HEK293 (cell line): ENCODE measurements at regions of chr5 and their contacts with region 1.

Region 1: DNA sequence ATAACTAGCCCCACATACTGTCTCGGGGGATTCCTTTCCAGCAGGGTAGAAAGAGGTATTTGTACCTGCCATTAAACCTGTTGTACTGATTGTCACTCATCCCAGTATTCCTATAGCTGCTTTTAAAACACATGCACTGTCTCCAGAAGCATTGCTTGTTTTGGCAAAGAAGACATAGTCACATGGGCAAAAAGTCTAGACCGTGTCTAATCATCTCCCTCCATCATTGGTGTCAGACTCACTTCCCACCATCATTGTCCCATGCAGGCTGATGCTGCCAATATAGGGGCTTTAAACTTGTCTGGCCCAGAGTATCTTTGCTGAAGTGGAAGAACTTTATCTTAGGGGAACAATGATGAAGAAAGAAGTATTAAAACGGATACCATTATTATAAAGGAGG is 12.6 kb downstream of the DNAJC21 start:
- H3K4me3 ChIP-seq: no peak overlapping the region
- H3K27ac ChIP-seq: no peak overlapping the region
- H3K4me1 ChIP-seq: no peaks in the 10 kb centered on the region
- CTCF ChIP-seq: no peak

Region 2: DNA sequence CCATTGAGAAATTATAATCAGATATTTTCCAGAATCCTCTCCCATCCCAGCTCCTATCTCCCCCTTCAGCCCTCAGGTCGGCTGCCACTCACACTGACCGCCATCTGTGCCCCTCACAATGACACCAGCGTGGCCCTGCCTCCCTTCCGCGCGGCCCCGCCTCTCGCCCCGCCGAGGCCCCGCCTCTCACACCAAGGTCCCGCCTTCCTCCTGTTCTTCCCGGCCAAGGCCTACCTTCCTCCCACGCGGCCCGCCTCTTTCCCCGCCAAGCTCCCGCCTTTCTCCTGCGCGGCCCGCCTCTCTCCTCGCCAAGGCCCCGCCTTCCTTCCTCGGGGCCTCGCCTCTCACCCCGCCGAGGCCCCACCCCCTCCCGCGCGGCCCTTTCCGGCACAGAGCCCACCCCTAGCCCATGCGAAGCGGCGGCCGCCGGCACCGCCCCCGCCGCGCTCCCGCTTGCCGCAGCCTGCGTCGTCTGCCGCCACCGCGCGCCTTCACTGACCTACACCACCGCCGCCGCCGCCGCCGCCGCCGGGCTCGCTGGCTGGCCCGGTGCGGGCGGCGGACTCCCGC is 12.7 kb before region 1 on chr5 and contains the start of gene DNAJC21:
- CTCF ChIA-PET with region 1: no interaction called
- POLR2A ChIA-PET with region 1: interaction called, 11 read pairs
- H3K4me3 ChIP-seq: peak within 1 kb of the TSS; percentile 98
- H3K27ac ChIP-seq: peak within 1 kb of the TSS; percentile 92
- H3K4me1 ChIP-seq: peaks cover 12% of the 10 kb centered on the region; the same call in 1 of the 2 replicates
- CTCF ChIP-seq: no peak

Region 3: DNA sequence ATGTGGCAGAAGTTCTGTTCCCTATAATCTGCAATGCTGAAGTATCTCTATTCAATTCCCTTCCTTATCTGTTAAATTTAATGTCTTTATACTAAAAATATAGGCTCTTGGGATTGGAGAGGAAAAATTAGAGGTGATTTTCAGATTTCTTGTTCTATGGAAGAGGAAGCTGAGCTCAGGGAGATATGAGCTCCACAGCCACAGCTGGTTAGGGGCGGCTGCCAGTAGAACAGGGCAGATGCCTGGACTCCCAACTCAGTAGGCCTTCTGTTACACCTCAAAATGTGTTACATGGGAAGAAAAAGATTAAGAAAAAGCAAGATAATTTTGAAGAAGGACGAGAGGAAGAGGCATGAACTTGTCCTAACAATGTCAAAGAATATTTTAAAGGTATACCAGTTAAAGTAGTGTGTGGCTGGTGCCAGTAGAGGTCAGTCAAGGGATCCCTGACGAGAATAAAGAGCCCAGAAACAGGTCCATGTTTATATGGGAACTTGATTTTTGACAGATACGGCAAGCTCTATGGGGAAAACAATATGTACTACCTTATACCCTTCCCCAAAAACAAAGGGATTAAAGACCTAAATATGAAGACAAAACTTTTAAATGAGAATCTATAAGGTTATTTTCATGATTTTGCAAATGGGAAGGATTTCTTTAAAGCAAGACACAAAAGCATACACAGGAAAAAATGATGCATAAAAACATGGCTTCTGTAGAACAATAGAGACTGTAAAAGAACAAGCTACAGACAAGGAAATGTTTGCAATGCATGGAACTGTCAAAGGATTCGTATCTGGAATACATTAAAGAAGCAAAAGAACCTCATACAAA is 16.1 kb after region 1 on chr5:
- CTCF ChIA-PET with region 1: interaction called, 19 read pairs
- POLR2A ChIA-PET with region 1: no interaction called
- H3K4me3 ChIP-seq: no peak overlapping the region
- H3K27ac ChIP-seq: no peak overlapping the region
- H3K4me1 ChIP-seq: no peaks in the 10 kb centered on the region
- CTCF ChIP-seq: peak; percentile 24; the same call in 1 of the 2 replicates